ENCODE measurements at regions of chr17 and their contacts with region 1.

Region 1: DNA sequence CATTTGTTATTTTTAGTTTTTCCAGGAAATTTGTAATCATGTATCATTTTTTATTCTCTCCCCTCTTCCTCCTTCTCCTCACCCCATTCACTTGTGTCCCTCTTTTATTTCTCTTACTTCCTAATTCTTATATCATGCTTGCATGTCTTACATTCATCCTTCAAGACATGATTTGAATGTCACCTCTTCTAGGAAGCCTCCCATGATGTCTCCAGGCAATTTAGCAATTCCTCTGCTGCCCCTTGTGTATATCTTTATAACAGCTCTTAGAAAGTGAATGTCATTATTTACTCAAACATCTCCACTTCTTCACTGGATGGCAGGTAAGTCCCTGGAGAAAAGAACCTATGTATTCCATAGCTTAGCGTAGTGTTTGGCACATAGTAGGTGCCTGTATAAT is 7.8 kb downstream of the HNF1B start:
- DNase-seq: no peak
- H3K4me3 Mint-ChIP-seq: no peak overlapping the region
- H3K27ac Mint-ChIP-seq: peak overlapping the region; percentile 38
- H3K4me1 Mint-ChIP-seq: peaks cover 49% of the 10 kb centered on the region
- H3K27me3 Mint-ChIP-seq: no peaks in the 10 kb centered on the region
- CTCF ChIP-seq: peak; percentile 74

Region 2: GRCh38 chr17:37299257-37299980 is 437.7 kb before region 1 on chr17:
- CTCF ChIA-PET with region 1: no interaction called
- intact Hi-C with region 1: no loop called
- DNase-seq: no peak
- H3K4me3 Mint-ChIP-seq: no peak overlapping the region
- H3K27ac Mint-ChIP-seq: no peak overlapping the region
- H3K4me1 Mint-ChIP-seq: peaks cover 24% of the 10 kb centered on the region
- H3K27me3 Mint-ChIP-seq: no peaks in the 10 kb centered on the region
- CTCF ChIP-seq: no peak

Region 3: DNA sequence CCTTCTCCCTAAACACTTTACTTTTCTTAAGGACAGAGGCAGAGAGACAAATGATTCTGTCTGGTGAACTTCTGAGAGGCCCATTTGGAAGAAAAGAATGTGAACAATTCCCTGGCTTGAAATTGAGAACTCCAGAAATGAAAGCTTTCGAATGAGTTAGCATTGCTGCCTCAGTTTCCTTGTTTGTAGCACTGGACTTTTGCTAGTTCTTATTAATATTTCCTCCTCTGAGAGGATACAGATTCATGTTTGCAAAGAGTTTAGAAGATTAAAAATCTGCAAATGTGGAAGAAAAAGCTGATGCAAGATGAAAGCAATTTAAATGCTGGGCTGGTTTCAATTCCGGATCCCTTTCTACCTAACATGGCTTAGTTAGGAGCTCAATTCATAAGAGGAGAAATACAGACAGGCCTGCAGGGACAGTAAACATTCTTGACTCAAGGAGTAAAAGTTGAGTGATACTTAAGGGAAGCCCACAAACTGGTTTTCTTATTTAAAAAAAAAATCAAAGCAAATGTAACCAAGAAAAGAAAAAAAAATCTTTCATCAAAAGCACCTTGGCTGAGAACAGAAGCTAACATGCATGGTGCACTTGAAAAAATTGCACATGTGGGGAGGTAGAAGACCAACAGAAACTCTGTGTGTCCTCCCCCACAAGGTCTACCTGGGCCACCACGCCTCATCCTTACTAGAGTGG is 19.3 kb before region 1 on chr17:
- CTCF ChIA-PET with region 1: interaction called, 19 read pairs
- intact Hi-C with region 1: no loop called
- DNase-seq: no peak
- H3K4me3 Mint-ChIP-seq: peak overlapping the region; percentile 17
- H3K27ac Mint-ChIP-seq: peak overlapping the region; percentile 85
- H3K4me1 Mint-ChIP-seq: peaks cover 86% of the 10 kb centered on the region
- H3K27me3 Mint-ChIP-seq: no peaks in the 10 kb centered on the region
- CTCF ChIP-seq: no peak

Region 4: DNA sequence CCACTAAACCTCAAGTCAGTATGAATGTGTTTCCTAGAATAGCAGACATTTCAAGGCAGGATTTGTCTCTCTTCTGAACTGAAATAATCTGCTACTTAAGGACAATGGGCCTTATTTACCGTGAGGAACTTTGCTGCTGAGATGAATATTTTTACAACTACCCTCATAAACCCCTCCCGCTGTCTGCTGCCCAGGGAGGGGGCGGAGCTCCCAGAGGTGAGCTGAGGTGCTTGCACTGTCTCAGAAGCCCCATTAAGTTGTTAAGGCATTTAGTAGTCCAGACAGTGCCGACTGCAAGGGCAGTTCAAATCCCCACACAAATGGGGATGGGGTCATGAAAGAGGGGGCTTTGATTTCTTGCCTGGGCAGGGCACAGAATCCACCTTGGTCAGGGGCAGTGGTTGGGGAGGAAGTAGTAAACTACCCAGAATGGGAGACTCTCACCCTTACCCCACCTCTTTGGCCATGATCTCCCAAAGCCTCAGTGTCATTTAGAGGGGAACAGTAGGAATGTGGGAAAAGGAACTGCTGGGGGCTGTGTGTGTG is 11.4 kb before region 1 on chr17:
- CTCF ChIA-PET with region 1: interaction called, 18 read pairs
- intact Hi-C with region 1: no loop called
- DNase-seq: no peak
- H3K4me3 Mint-ChIP-seq: no peak overlapping the region
- H3K27ac Mint-ChIP-seq: peak overlapping the region; percentile 63
- H3K4me1 Mint-ChIP-seq: peaks cover 69% of the 10 kb centered on the region
- H3K27me3 Mint-ChIP-seq: no peaks in the 10 kb centered on the region
- CTCF ChIP-seq: no peak